Common myeloid progenitor, CD34-positive (primary cell): ENCODE measurements at regions of chr22 and their contacts with region 1.

Region 1: GRCh38 chr22:19629720-19630419 is 84.4 kb upstream of the SEPTIN5 start:
- DNase-seq: peak; percentile 80 to 90 (median 87)
- H3K4me3 ChIP-seq: no peak overlapping the region
- H3K27ac ChIP-seq: no peak overlapping the region
- H3K4me1 ChIP-seq: peaks cover 0 to 14% (median 2%) of the 10 kb centered on the region in 4 experiments
- H3K27me3 ChIP-seq: no peaks in the 10 kb centered on the region

Region 2: GRCh38 chr22:19479357-19480172 is 150.3 kb before region 1 on chr22 and contains the start of gene CDC45:
- CTCF ChIA-PET with region 1: interaction called, 64 read pairs
- POLR2A ChIA-PET with region 1: no interaction called
- DNase-seq: peak; percentile 98 to 99 (median 98)
- H3K4me3 ChIP-seq: peak within 1 kb of the TSS; percentile 61 to 100 (median 89)
- H3K27ac ChIP-seq: peak within 1 kb of the TSS; percentile 100
- H3K4me1 ChIP-seq: peaks cover 16 to 27% (median 25%) of the 10 kb centered on the region in 4 experiments
- H3K27me3 ChIP-seq: no peaks in the 10 kb centered on the region

Region 3: DNA sequence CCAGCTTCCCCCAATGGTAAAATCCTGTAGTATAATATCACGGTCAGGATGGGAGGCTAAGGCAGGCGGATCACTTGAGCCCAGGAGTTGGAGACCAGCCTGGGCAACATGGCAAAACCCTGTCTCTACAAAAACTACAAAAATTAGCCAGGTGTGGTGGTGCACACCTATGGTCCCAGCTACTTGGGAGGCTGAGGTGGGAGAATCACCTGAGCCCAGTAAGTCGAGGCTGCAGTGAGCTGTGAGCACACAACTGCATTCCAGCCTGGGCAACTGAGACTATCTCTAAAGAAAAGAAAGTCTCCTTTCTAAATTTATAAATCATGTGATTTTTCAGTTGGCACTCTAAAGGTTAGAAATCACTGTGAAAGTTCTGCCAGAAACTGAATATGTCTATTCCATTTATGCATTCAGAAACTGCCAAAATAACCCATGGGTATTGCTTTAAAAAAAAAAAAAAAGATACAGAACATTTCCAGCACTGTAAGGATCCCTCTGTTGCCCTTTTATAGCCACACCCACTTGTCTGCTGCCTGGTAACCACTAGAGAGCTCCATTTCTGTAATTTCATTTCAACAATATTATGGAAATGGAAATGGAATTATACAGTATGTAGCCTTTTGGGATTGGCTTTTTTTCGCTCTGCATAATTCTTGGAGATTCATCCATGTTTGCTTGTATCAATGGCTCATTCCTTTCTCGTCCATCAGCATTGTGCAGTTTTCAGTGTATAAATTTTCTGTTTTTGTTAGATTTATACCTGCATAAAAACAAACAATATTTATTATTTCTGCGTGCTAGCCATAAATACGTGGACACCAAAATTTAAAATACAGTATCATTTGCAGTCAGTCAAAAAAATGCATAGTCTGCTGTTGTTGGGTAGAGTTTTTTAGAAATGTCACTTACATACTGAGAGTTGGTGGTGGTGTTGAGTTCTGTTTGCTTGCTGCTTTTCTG is 140.7 kb before region 1 on chr22:
- CTCF ChIA-PET with region 1: interaction called, 136 read pairs
- POLR2A ChIA-PET with region 1: no interaction called
- DNase-seq: peak; percentile 31 to 69 (median 63)
- H3K4me3 ChIP-seq: no peak overlapping the region
- H3K27ac ChIP-seq: peak overlapping the region in 1 of 2 experiments; percentile 20
- H3K4me1 ChIP-seq: peaks cover 0 to 4% (median 0%) of the 10 kb centered on the region in 4 experiments
- H3K27me3 ChIP-seq: no peaks in the 10 kb centered on the region

Region 4: GRCh38 chr22:19495562-19496323 is 134.1 kb before region 1 on chr22:
- CTCF ChIA-PET with region 1: interaction called, 136 read pairs
- POLR2A ChIA-PET with region 1: no interaction called
- DNase-seq: peak; percentile 79 to 89 (median 89)
- H3K4me3 ChIP-seq: no peak overlapping the region
- H3K27ac ChIP-seq: no peak overlapping the region
- H3K4me1 ChIP-seq: peaks cover 0 to 6% (median 3%) of the 10 kb centered on the region in 4 experiments
- H3K27me3 ChIP-seq: no peaks in the 10 kb centered on the region

Region 5: GRCh38 chr22:19644314-19645223 is 14.7 kb after region 1 on chr22:
- CTCF ChIA-PET with region 1: interaction called, 12 read pairs
- POLR2A ChIA-PET with region 1: no interaction called
- DNase-seq: no peak
- H3K4me3 ChIP-seq: peak overlapping the region in 2 of 7 experiments; percentile 12 to 53
- H3K27ac ChIP-seq: peak overlapping the region; percentile 50 to 57
- H3K4me1 ChIP-seq: peaks cover 1 to 43% (median 20%) of the 10 kb centered on the region in 4 experiments
- H3K27me3 ChIP-seq: peaks cover 0 to 2% (median 0%) of the 10 kb centered on the region in 5 experiments

Region 6: DNA sequence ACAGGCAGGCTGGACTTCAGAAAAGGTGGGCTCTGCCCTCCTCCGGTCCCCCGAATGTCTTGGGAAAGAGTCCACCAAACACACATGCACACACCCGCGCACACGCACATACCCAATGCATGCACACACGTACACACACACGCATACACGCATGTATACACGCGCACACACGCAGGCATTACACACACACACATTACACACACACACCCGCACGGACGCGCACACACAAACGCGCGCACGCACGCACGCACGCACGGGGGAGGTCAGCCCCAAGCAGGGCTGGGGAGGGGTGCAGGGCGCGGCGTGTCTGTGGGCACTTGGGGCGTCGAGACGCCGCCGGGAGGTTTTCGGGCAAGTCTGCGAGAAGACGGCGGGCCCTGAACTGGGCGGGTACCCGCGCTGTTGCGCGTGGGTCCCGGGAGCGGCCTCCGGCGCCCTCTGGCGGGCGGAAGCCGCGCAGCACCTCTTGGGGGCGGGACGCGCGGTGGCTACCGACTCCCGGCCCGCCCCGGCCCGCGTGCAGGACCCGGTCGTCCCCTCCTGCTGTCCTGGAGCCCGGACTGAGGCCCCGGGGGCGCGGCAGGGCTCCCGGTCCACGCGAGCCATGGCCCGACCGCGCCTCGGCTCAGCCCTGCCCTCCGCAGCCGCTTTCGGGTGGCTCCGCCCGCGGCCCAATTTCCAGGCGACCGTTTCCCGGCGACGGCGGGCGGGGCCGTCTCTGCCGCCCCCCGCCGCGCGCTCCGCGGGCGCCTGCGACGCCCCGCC is 88.0 kb after region 1 on chr22:
- CTCF ChIA-PET with region 1: interaction called, 16 read pairs
- POLR2A ChIA-PET with region 1: no interaction called
- DNase-seq: peak; percentile 73 to 84 (median 83)
- H3K4me3 ChIP-seq: peak overlapping the region; percentile 48 to 82 (median 60)
- H3K27ac ChIP-seq: peak overlapping the region in 1 of 2 experiments; percentile 74
- H3K4me1 ChIP-seq: peaks cover 0 to 59% (median 44%) of the 10 kb centered on the region in 4 experiments
- H3K27me3 ChIP-seq: peaks cover 0 to 29% (median 0%) of the 10 kb centered on the region in 5 experiments